ENCODE measurements at regions of chr4 and their contacts with region 1.

Region 1: DNA sequence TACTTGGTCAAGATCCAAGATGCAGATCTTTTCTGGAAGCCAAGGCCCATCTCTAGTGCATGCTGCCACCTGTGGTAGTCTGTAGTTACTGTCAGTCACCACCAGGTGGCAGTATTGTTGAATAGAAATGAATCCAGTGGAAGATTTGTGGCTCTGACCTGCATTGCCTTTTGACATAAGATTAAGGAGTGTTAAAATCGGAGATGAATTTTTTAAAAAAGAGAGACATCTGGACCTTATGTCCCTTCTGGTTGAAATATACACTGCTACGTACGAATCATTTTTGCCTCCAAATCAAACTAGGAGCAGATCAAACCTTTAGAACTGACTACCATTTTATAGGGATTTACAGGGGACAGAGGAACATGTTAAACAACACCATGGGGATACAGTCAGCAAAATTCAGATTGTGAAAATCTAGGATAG is 46.9 kb upstream of the RHOH start:
- DNase-seq: peak in 1 of 3 donors; percentile 82
- ATAC-seq: peak; percentile 95
- H3K4me3 ChIP-seq: no peak overlapping the region
- H3K4me1 ChIP-seq: no peaks in the 10 kb centered on the region
- CTCF ChIP-seq: peak; percentile 64

Region 2: GRCh38 chr4:40264995-40265909 is 115.3 kb after region 1 on chr4:
- intact Hi-C with region 1: no loop called
- DNase-seq: peak; percentile 35 to 57 (median 36)
- ATAC-seq: peak; percentile 61
- H3K4me3 ChIP-seq: no peak overlapping the region
- H3K4me1 ChIP-seq: no peaks in the 10 kb centered on the region
- CTCF ChIP-seq: no peak

Region 3: DNA sequence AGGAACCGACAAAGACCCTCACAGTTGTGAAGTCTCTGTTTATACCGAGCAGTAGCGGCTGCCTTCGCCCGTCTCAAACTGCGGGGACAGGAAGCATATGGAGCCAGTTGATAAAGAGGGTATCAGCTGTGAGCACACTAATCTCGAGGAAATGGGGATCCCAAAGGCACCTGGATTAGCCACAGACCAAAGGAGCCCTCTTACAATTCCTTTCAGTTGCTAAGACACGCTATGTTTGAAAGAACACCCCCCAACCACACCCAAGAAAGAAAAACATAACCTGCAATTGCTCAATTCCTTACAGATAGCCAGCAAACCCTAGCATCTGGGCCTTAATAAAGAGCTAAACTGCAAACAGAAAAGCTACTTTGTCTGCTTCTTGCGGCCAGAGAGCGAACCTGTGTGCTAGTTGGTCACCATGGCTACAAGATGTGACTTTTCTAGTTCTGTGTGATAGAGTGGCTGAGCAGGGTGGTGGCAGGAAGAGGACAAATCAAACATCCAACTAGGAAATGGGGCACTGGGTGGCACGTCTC is 161.9 kb after region 1 on chr4:
- intact Hi-C with region 1: loop called (anchors 5 kb)
- DNase-seq: no peak
- ATAC-seq: peak; percentile 53
- H3K4me3 ChIP-seq: no peak overlapping the region
- H3K4me1 ChIP-seq: peaks cover 9% of the 10 kb centered on the region
- CTCF ChIP-seq: no peak

Region 4: DNA sequence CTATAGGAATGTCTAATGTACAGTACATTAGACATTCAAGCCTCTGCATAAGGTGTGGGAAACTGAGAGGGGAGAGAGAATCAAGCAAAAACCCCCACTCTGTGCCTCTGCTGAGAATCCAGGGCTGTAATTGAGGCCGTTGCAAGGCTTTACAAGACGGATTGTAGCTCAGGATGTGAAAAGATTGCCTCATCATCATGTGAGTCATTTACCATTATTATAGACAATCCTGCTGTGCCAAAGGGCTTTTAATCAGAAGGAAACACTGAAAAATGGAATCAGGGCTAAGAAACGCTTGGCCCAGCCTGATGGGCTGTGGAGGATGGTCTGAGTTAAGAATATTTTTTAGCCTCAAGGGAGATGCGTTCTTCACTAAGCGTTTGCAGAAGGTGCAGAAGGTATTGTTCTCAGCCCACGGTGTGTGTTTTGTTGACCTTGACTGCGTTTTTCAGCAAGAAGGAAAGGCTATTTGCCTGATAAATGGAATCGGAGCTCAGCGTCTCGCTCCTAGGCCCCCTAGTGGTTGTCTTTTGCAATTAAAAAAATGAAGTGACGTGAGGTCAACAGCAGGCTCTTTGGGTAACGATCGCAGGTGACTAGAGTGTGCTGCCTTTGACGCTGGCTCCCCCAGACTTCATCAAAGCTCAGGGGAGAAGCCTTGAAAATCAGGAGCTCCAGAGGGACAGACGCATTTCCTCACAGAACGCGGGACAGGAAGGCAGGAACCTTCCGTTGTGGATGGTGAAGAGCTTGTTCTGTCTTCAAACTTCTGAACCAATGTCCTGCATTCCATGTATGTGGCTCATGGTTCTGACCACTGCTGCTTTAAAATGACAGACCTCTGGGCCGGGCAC is 167.0 kb after region 1 on chr4:
- intact Hi-C with region 1: loop called (anchors 5 kb)
- DNase-seq: peak in 2 of 3 donors; percentile 34 to 61
- ATAC-seq: peak; percentile 86
- H3K4me3 ChIP-seq: no peak overlapping the region
- H3K4me1 ChIP-seq: peaks cover 15% of the 10 kb centered on the region
- CTCF ChIP-seq: peak; percentile 35

Measured in mucosa of descending colon (tissue), 3 donors.